Head of caudate nucleus (tissue), 42 donors: ENCODE measurements at regions of chr3 and their contacts with region 1.

Region 1: GRCh38 chr3:48548729-48549705 is 7.6 kb downstream of the PFKFB4 start:
- DNase-seq: peak; percentile 65 to 98 (median 92)

Region 2: GRCh38 chr3:48446425-48447193 is 102.4 kb before region 1 on chr3 and contains the start of gene ATRIP:
- intact Hi-C with region 1: loop called (anchors 5 kb)
- DNase-seq: peak; percentile 74 to 97 (median 91)

Region 3: GRCh38 chr3:48465531-48466378 is 83.3 kb before region 1 on chr3:
- intact Hi-C with region 1: loop called (anchors 2 kb)
- DNase-seq: peak; percentile 82 to 99 (median 96)

Region 4: DNA sequence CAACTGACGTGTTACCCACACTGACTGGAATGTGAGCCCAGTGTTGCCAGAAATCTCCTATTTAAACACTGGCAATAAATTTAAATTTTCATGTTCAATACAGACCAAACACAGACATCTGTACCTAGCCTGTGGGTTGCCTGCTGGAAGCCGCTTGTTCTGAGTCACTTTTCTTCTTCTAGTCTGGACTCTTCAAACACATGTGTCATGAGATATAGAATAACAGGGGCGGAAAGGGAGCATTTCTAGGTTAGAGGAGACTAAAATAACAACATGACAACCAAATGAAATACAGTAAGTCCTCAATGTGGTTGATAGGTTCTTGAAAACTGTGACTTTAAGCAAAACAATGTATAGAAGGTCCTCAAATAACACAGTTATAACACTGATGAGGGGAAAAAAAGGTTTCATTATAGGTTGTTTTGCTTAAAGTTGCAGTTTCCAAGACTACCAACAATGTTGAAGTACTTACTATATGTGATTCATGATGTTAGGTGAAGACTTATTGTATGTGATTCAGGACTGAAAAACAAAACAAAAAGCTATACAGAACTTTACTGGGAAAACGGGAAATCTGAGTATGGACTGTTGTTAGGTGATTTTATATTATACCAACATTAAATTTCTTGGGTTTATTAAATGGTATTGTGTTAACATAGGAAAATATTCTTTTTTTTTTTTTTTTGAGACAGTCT is 235.6 kb after region 1 on chr3:
- intact Hi-C with region 1: no loop called
- DNase-seq: no peak